AG04449 (cell line): ENCODE measurements at regions of chr17 and their contacts with region 1.

Region 1: DNA sequence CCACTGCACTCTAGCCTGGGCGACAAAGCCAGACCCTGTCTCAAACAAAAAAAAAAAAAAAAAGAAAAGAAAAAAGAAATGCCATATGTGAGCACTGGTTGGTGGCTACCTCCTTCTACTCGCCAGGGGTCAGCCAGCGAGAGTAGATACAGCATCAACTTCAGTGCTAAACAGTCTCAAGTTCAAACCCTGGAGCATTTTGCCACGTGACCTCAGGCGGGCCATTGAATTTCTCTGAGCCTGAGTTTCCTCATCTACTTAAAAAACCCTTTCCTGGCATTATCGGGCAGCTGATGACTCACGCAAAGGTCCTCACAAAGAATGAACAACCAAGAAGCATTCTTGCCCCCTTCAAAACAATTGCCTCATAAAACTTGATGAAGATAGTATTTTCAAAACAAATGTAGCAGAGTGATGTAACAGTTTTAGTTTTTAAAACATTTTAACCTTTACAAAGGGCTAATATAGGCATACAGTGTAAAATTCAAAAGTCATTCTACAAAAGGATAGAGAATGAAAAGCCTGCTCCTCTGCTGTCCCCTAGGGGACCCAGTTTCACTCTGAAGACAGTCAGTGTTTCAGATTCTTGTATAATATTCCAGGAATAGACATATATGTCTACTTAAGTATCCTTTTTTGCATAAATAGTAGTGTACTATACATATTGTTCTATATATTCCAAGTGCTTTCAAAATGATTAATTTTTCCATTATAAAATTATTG is 28.4 kb downstream of the DNAH2 start:
- DNase-seq: peak; percentile 23
- H3K4me3 ChIP-seq: no peak overlapping the region
- CTCF ChIP-seq: no peak

Region 2: DNA sequence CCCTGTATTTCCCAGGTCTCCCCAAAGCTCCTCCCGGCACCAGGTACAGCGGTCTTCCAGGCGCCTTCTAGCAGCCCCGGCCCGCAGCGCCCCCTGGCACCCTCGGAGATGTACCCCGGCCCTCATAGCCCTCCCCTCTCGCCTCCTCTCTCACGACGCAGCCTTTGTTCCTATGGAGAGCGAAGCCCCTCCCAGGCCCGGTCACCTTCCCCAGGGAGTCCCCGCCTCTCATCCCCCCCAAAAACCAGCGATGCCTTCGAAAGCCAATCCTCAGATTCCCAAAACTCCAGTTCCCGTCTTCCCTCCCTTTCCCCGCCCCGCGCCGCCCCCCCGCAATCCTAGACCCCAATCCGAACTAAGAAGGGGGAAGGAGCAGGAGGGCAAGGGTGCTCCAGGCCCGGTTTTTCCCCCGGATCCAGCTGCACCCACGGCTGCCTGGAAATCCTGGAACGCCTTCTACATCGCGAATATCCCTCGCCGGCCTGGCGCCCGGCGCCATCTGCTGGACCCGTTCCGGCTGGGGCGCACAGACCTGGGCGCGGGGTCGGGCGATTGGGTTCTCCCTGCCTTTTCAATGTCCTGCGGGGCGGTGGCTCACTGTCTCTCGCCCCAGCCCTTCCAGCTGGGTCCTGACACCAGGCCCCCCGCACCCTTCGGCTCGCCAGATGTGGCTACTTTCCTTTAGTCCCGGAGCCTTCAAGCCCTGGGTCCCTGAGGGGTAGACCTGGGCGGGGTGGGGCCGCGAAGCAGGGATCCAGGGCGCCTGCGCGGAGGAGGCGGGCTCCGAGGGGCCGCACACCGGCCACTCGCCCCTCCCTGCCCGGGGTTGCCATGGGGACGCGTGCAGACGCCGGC is 28.8 kb before region 1 on chr17 and contains the start of gene DNAH2:
- CTCF ChIA-PET with region 1: interaction called, 25 read pairs
- POLR2A ChIA-PET with region 1: no interaction called
- DNase-seq: peak; percentile 24
- H3K4me3 ChIP-seq: peak within 1 kb of the TSS; percentile 71
- CTCF ChIP-seq: peak; percentile 69

Region 3: DNA sequence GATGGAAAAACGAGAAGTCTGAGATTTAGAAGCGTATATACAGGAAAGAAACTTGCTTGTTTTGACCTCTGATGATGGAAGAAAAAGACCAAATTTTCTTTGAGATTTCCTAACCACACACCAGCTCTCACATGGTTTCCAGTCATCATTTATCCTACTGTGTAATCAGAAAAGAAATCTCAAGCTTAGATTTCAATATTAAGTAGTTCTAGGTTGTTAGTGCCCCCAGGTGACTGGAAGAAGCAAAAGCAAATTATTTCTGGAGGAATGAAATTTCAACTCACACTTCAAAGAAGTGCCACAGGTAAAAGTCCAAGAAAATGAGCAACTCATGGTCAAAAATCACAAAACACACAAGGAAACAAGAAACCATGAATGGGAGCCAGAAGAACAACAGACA is 36.3 kb after region 1 on chr17:
- CTCF ChIA-PET with region 1: interaction called, 384 read pairs
- POLR2A ChIA-PET with region 1: no interaction called
- DNase-seq: no peak
- H3K4me3 ChIP-seq: no peak overlapping the region
- CTCF ChIP-seq: no peak

Region 4: GRCh38 chr17:7834962-7835813 is 89.3 kb after region 1 on chr17:
- CTCF ChIA-PET with region 1: interaction called, 36 read pairs
- POLR2A ChIA-PET with region 1: no interaction called
- DNase-seq: peak; percentile 91
- H3K4me3 ChIP-seq: peak overlapping the region; percentile 83
- CTCF ChIP-seq: peak; percentile 95

Region 5: DNA sequence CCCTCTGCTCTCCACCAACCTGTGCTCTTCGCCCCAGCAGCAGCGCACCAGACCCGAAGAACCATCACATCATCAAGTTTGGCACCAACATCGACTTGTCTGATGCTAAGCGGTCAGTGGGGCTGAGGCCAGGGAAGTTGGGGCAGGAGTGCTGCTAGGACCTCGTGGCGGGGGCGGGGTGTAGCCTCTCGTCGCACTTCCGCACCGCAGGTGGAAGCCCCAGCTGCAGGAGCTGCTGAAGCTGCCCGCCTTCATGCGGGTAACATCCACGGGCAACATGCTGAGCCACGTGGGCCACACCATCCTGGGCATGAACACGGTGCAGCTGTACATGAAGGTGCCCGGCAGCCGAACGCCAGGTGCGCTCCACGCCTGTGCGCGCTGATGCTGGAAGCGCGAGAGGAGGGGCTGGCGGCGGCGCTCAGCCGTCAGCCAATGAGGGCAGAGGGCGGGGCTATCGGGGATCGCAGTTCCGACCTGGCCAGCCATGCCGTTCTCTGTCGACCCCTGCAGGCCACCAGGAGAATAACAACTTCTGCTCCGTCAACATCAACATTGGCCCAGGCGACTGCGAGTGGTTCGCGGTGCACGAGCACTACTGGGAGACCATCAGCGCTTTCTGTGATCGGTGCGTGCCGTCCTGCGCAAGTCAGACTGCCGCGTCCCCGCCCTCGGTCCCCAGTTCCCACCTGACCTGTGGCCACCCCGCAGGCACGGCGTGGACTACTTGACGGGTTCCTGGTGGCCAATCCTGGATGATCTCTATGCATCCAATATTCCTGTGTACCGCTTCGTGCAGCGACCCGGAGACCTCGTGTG is 105.7 kb after region 1 on chr17:
- CTCF ChIA-PET with region 1: interaction called, 36 read pairs
- POLR2A ChIA-PET with region 1: interaction called, 5 read pairs
- DNase-seq: no peak
- H3K4me3 ChIP-seq: no peak overlapping the region
- CTCF ChIP-seq: peak; percentile 93

Region 6: DNA sequence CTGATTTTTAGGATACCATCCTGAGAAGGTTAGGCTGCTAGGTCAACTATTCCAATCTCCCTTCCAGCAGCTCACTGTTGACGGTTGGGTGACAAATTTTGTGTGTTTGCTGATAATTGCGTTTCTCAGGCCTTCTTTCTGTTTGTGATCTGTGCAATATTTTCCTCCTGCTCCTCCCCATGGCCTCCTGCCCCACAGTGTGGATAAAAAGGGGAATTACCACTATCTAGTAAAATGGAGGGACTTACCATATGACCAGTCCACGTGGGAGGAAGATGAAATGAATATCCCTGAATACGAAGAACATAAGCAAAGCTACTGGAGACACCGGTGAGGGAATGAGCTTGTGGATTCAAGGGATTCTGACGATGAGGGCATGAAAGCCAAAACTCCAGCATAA is 151.9 kb after region 1 on chr17:
- CTCF ChIA-PET with region 1: interaction called, 13 read pairs
- POLR2A ChIA-PET with region 1: no interaction called
- DNase-seq: no peak
- H3K4me3 ChIP-seq: no peak overlapping the region
- CTCF ChIP-seq: peak; percentile 44